Activated CD4-positive, alpha-beta T cell treated with anti-CD3 and anti-CD28 coated beads for 36 hours (primary cell): ENCODE measurements at regions of chr15 and their contacts with region 1.

Region 1: DNA sequence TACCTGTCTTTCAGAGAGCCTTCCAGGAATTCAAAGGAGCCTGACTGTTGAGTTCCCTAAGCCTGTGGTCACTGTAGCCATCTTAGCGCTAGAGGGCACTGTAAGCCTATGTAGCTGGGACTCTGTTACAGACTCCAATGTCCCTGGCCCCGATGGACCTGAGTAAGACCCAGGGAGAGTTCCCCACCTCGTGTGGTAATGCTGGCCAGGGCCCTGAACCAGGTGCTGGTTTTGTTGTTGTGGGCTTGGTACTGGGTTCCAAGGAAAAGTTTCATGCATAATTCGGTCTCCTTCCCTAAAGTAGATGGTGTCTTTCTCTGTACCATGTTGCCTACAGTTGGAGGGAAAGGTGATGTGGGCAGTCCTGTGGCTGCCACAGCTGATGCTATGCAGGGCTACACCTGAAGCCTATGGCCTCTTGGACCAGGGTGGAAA is 32.4 kb downstream of the CDAN1 start:
- DNase-seq: peak; percentile 78
- ATAC-seq: peak; percentile 98
- H3K4me3 Mint-ChIP-seq: no peak overlapping the region
- H3K27ac Mint-ChIP-seq: no peak overlapping the region
- H3K4me1 Mint-ChIP-seq: peaks cover 5% of the 10 kb centered on the region
- H3K27me3 Mint-ChIP-seq: no peaks in the 10 kb centered on the region

Region 2: DNA sequence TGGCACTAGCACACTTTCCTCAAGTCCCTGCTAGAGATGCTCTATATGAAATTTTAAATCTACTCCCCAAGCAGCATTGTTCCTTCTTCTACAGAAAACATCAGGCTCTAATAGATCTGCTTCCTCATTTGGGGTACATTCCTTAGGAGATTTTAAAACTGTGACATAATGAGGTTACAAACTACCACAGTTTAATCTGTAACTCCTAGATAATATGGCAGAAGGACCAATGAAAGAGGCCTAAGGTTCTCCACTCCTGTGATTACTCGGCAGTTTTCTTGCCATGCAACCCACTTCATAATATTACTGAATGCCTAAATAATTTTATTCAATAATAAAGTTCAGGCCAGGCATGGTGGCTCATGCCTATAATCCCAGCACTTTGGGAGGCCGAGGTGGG is 229.7 kb before region 1 on chr15:
- CTCF ChIA-PET with region 1: no interaction called
- POLR2A ChIA-PET with region 1: no interaction called
- intact Hi-C with region 1: no loop called
- DNase-seq: no peak
- ATAC-seq: no peak
- H3K4me3 Mint-ChIP-seq: no peak overlapping the region
- H3K27ac Mint-ChIP-seq: no peak overlapping the region
- H3K4me1 Mint-ChIP-seq: peaks cover 10% of the 10 kb centered on the region
- H3K27me3 Mint-ChIP-seq: no peaks in the 10 kb centered on the region

Region 3: DNA sequence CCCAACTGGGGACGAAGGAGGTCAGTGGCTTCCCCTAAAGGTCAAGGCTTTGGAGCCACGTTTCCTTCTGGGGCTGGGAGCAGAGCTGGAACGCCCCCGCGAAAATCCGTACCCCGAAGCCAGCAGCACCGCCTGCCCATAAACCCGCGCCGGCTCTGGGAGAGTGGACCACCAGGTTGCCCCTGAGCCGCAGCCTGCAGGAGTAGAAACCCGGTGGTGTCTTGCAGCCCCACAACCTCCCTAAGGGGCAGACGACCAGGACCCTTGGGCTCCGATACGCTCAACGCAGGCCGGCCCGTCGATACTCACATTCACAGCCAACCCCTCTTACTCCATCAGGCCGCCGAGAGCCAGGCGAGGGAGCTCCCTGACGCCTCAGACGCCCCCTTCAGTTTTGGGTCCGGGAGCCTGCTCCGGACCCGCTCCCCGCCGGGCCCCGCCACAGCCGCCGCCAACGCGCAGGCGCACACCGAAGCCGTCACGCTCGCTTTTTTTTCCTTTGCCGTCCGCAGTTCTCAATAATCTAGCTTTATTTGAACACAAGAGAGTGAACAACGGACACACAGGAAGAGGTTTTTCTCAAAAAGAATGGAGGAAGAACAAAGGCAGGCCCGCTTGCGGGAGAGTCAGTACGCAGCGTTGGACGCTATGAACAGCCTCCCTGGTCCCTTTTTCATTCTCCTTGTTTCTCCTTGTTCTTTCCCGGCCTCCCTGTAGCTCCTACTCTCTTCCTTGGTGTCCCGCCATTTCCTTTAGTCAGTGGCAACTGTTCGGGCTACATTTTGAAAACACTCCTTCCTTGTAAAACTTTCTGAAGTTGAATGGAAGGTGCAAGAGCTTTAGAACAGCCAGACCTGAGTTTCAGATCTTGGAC is 213.6 kb before region 1 on chr15 and contains the start of gene ZNF106:
- CTCF ChIA-PET with region 1: no interaction called
- POLR2A ChIA-PET with region 1: no interaction called
- intact Hi-C with region 1: no loop called
- DNase-seq: peak; percentile 90
- ATAC-seq: peak; percentile 50
- H3K4me3 Mint-ChIP-seq: peak within 1 kb of the TSS; percentile 81
- H3K27ac Mint-ChIP-seq: peak within 1 kb of the TSS; percentile 89
- H3K4me1 Mint-ChIP-seq: peaks cover 47% of the 10 kb centered on the region
- H3K27me3 Mint-ChIP-seq: no peaks in the 10 kb centered on the region
- total RNA-seq, gene ZNF106: 52.9 to 62.7 TPM

Region 4: GRCh38 chr15:42511010-42511396 is 193.5 kb before region 1 on chr15:
- CTCF ChIA-PET with region 1: no interaction called
- POLR2A ChIA-PET with region 1: no interaction called
- intact Hi-C with region 1: no loop called
- DNase-seq: no peak
- ATAC-seq: no peak
- H3K4me3 Mint-ChIP-seq: no peak overlapping the region
- H3K27ac Mint-ChIP-seq: no peak overlapping the region
- H3K4me1 Mint-ChIP-seq: no peaks in the 10 kb centered on the region
- H3K27me3 Mint-ChIP-seq: no peaks in the 10 kb centered on the region

Region 5: DNA sequence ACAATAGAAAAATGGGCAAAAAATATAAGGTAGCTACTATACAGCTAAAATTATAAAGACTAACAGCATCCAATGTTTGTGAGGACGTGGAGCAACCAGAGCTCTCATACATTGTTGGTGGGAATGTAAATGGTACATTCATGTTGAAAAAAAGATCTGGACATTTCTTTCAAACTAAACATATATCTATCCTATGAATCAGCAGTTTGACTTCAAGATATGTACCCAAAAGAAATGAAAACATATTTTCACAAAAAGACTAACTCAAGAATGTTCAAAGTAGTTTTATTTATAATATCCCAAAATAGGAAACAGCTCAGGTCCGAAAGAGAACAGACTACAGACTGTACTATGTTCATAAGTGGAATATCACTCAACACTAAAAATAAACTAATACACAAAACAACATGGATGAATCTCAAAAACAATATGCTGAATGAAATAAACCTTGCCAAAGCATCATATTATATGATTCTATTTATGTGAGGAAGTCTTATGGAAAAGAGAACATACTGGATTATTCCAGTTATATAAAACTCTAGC is 224.9 kb after region 1 on chr15:
- CTCF ChIA-PET with region 1: interaction called, 46 read pairs
- POLR2A ChIA-PET with region 1: no interaction called
- intact Hi-C with region 1: loop called (anchors 1 kb)
- DNase-seq: no peak
- ATAC-seq: no peak
- H3K4me3 Mint-ChIP-seq: no peak overlapping the region
- H3K27ac Mint-ChIP-seq: no peak overlapping the region
- H3K4me1 Mint-ChIP-seq: no peaks in the 10 kb centered on the region
- H3K27me3 Mint-ChIP-seq: no peaks in the 10 kb centered on the region

Region 6: GRCh38 chr15:43204016-43204901 is 499.8 kb after region 1 on chr15:
- CTCF ChIA-PET with region 1: no interaction called
- POLR2A ChIA-PET with region 1: no interaction called
- intact Hi-C with region 1: loop called in 1 of 2 experiments (anchors 1 kb)
- DNase-seq: peak; percentile 77
- ATAC-seq: peak; percentile 72
- H3K4me3 Mint-ChIP-seq: no peak overlapping the region
- H3K27ac Mint-ChIP-seq: no peak overlapping the region
- H3K4me1 Mint-ChIP-seq: peaks cover 7% of the 10 kb centered on the region
- H3K27me3 Mint-ChIP-seq: peaks cover 2% of the 10 kb centered on the region